Panc1 (cell line): ENCODE measurements at regions of chrX and their contacts with region 1.

Region 1: GRCh38 chrX:71181910-71182799 is 37.5 kb downstream of the NLGN3 start:
- DNase-seq: peak; percentile 88
- ATAC-seq: peak; percentile 97
- H3K4me3 ChIP-seq: peak overlapping the region; percentile 43 to 61
- H3K27ac ChIP-seq: peak overlapping the region; percentile 94
- H3K4me1 ChIP-seq: no peaks in the 10 kb centered on the region; the same call in none of the 2 replicates
- H3K27me3 ChIP-seq: no peaks in the 10 kb centered on the region
- CTCF ChIP-seq: no peak

Region 2: GRCh38 chrX:70664726-70665125 is 517.4 kb before region 1 on chrX:
- CTCF ChIA-PET with region 1: no interaction called
- POLR2A ChIA-PET with region 1: interaction called, 10 read pairs
- in situ Hi-C with region 1: no loop called
- intact Hi-C with region 1: no loop called
- DNase-seq: no peak
- ATAC-seq: no peak
- H3K4me3 ChIP-seq: no peak overlapping the region
- H3K27ac ChIP-seq: no peak overlapping the region
- H3K4me1 ChIP-seq: no peaks in the 10 kb centered on the region
- H3K27me3 ChIP-seq: peaks cover 7% of the 10 kb centered on the region
- CTCF ChIP-seq: peak; percentile 49; the same call in 1 of the 2 replicates

Region 3: DNA sequence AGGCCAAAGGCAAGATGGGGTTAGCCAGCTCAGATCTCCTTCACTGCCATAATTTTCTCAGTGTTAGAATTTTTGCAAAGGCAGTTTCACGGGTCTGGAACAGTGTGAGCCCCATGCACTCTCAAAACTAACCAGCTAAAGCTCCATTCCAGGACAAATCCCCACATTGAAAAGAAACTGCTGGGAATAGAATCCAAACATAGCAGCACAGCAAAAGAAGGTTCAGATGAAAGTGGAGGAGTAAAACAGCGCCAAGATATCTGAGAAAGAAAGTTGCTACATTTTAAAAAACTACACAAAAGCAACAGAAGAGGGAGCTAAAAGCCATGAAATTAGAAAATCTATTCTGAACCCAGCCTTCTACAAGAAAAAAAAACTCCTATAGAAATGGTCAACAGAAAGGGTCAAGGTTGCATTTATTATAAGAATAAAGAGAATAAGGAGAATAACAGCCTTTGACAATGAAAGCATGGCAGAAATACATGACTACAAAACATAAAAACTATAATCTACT is 211.6 kb before region 1 on chrX:
- CTCF ChIA-PET with region 1: interaction called, 3 read pairs
- POLR2A ChIA-PET with region 1: no interaction called
- in situ Hi-C with region 1: no loop called
- intact Hi-C with region 1: loop called (anchors 2 kb)
- DNase-seq: no peak
- ATAC-seq: no peak
- H3K4me3 ChIP-seq: no peak overlapping the region
- H3K27ac ChIP-seq: no peak overlapping the region
- H3K4me1 ChIP-seq: no peaks in the 10 kb centered on the region
- H3K27me3 ChIP-seq: peaks cover 3% of the 10 kb centered on the region
- CTCF ChIP-seq: peak; percentile 40; the same call in 1 of the 2 replicates

Region 4: DNA sequence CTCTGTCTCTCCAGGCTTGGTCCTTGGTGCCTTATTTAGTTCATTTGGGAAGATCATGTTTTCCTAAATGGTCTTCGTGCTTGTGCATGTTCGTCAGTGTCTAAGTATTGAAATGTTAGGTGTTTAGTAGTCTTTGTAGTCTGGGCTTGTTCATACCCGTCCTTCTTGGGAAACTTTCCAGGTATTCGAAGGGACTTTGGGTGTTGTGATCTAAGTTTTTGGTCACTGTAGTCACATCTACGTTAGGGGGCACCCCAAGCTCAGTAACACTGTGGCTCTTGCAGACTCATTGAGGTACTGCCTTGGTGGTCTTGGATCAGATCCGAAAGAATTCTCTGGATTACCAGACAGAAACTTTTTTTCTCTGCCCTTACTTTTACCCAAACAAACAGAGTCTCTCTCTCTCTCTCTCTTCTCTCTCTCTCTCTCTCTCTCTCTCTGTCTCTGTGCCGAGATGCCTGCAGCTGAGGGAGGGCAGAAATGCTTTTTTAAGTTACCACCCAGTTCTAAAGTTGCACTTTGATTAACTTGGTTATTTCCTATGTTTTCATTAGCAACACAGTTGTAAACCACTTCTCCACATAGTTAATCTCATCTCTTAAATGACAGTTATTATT is 183.6 kb before region 1 on chrX:
- CTCF ChIA-PET with region 1: no interaction called
- POLR2A ChIA-PET with region 1: no interaction called
- in situ Hi-C with region 1: no loop called
- intact Hi-C with region 1: loop called (anchors 1 kb)
- DNase-seq: no peak
- ATAC-seq: peak; percentile 58; the same call in 1 of the 2 replicates
- H3K4me3 ChIP-seq: no peak overlapping the region
- H3K27ac ChIP-seq: no peak overlapping the region
- H3K4me1 ChIP-seq: no peaks in the 10 kb centered on the region
- H3K27me3 ChIP-seq: peaks cover 6% of the 10 kb centered on the region; the same call in 1 of the 2 replicates
- CTCF ChIP-seq: peak; percentile 56

Region 5: DNA sequence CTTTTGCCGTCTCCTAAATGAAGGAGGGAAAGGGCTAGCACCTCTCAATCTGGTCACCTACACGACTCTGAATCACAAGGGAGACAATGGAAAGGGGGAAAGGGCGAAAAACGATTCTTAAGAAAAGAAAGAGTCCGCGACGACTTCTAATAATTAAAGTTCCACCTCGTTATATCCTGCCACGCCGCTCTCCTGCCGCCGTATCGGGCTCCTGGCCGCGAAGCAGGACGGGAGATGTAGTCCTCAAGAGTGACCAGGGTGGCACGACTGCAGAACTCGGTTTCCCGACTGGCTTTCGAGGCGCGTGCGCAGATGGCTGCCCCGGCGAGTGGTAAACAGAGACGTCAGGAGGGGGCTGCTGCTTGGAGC is 86.6 kb before region 1 on chrX and contains the start of gene FOXO4:
- CTCF ChIA-PET with region 1: interaction called, 4 read pairs
- POLR2A ChIA-PET with region 1: no interaction called
- in situ Hi-C with region 1: no loop called
- intact Hi-C with region 1: loop called (anchors 5 kb)
- DNase-seq: peak; percentile 47
- ATAC-seq: peak; percentile 97
- H3K4me3 ChIP-seq: peak within 1 kb of the TSS; percentile 57 to 74
- H3K27ac ChIP-seq: peak within 1 kb of the TSS; percentile 73
- H3K4me1 ChIP-seq: no peaks in the 10 kb centered on the region; the same call in 1 of the 2 replicates
- H3K27me3 ChIP-seq: peaks cover 4% of the 10 kb centered on the region
- CTCF ChIP-seq: no peak
- total RNA-seq, gene FOXO4: 2.9 TPM

Region 6: DNA sequence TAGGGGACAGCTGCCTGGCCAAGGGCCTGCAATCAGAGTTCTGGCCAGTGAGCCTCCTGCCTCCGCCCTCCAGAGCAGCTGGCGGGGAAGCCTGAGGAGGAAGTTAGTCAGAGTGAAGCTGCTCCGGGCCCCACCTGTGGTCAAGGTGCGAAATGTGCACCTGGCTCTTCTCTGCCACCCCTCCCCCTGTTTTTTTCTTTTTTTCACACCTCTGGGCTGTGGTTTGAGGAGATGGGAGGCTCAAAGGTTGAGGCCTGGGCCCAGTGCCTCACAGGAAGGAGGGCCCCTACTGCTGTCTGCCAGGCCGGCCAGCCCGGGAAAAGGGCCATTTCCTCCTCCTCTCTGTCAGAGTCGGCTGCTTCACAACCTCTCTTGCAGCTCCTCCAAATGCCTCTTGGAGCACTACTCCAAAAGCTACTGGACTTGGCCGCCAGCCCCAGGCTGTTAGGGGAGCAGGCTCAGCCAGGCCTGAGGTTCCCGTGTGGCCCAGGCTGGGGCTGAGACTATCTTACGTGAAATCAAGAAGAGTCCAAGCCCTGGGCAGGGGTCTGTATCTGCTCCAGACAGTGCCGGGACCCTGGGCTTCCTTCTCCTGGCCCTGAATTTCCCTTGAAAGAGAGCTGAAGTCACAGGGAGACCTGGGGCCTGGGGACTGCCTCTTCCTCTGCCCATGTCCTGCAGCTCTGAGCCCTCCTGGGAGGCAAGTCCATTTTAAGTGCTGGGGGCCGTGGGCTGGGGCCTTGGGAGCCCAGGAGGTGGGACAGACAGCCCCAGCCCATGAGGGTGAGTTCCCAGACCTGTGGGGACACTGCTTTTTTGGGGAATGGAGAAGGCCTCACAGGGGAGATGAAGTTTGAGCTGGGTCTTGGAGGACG is 440.7 kb after region 1 on chrX:
- CTCF ChIA-PET with region 1: no interaction called
- POLR2A ChIA-PET with region 1: no interaction called
- in situ Hi-C with region 1: no loop called
- intact Hi-C with region 1: no loop called
- DNase-seq: no peak
- ATAC-seq: peak; percentile 73
- H3K4me3 ChIP-seq: no peak overlapping the region
- H3K27ac ChIP-seq: no peak overlapping the region
- H3K4me1 ChIP-seq: no peaks in the 10 kb centered on the region; the same call in 1 of the 2 replicates
- H3K27me3 ChIP-seq: no peaks in the 10 kb centered on the region
- CTCF ChIP-seq: no peak